Transverse colon (tissue), 4 donors: ENCODE measurements at regions of chr6 and their contacts with region 1.

Region 1: GRCh38 chr6:9420316-9421015 is 985.1 kb upstream of the SLC35B3 start:
- DNase-seq: no peak
- H3K4me3 ChIP-seq: no peak overlapping the region
- H3K27ac ChIP-seq: no peak overlapping the region
- H3K4me1 ChIP-seq: no peaks in the 10 kb centered on the region
- H3K27me3 ChIP-seq: no peaks in the 10 kb centered on the region
- CTCF ChIP-seq: no peak
- EP300 ChIP-seq: no peak
- POLR2A ChIP-seq: no peak

Region 2: GRCh38 chr6:8329562-8329961 is 1090.9 kb before region 1 on chr6:
- in situ Hi-C with region 1: no loop called
- intact Hi-C with region 1: loop called (anchors 5 kb)
- DNase-seq: no peak
- H3K4me3 ChIP-seq: no peak overlapping the region
- H3K27ac ChIP-seq: no peak overlapping the region
- H3K4me1 ChIP-seq: peaks cover 0 to 9% (median 0%) of the 10 kb centered on the region in 4 donors
- H3K27me3 ChIP-seq: no peaks in the 10 kb centered on the region
- CTCF ChIP-seq: no peak
- EP300 ChIP-seq: no peak
- POLR2A ChIP-seq: no peak